HepG2 (cell line): ENCODE measurements at regions of chr10 and their contacts with region 1.

Region 1: GRCh38 chr10:70169649-70170364 is 507 bp downstream of the SAR1A start:
- DNase-seq: no peak
- ATAC-seq: peak; percentile 5
- H3K4me3 ChIP-seq: peak overlapping the region; percentile 82 to 90 (median 90)
- H3K27ac ChIP-seq: peak overlapping the region; percentile 80
- H3K4me1 ChIP-seq: peaks cover 69% of the 10 kb centered on the region
- H3K27me3 ChIP-seq: no peaks in the 10 kb centered on the region; a peak in 1 of 5 replicates
- CTCF ChIP-seq: no peak
- EP300 ChIP-seq: no peak
- POLR2A ChIP-seq: no peak; a peak in 1 of 4 replicates
- RAD21 ChIP-seq: no peak

Region 2: DNA sequence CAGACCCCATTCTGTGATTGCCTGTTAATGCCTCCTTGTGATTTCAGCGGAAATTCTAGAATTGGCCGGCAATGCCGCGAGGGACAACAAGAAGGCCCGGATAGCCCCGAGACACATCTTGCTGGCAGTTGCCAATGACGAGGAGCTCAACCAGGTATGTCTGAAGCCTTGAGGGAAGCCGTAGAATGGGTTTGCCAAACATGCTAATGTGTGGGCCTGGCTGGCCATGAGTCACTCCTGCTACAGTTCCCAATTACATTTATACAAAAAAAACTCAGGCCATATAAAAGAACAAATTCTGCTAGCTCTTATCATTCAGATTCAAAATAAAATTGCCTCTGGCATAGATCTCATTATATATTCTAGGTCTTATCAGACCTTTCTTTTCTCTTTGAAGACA is 79.8 kb before region 1 on chr10:
- CTCF ChIA-PET with region 1: no interaction called
- POLR2A ChIA-PET with region 1: interaction called, 12 read pairs
- in situ Hi-C with region 1: no loop called
- intact Hi-C with region 1: no loop called
- DNase-seq: no peak
- ATAC-seq: no peak
- H3K4me3 ChIP-seq: no peak overlapping the region
- H3K27ac ChIP-seq: peak overlapping the region; percentile 79
- H3K4me1 ChIP-seq: peaks cover 97% of the 10 kb centered on the region
- H3K27me3 ChIP-seq: no peaks in the 10 kb centered on the region
- CTCF ChIP-seq: no peak
- EP300 ChIP-seq: no peak
- POLR2A ChIP-seq: no peak
- RAD21 ChIP-seq: no peak

Region 3: DNA sequence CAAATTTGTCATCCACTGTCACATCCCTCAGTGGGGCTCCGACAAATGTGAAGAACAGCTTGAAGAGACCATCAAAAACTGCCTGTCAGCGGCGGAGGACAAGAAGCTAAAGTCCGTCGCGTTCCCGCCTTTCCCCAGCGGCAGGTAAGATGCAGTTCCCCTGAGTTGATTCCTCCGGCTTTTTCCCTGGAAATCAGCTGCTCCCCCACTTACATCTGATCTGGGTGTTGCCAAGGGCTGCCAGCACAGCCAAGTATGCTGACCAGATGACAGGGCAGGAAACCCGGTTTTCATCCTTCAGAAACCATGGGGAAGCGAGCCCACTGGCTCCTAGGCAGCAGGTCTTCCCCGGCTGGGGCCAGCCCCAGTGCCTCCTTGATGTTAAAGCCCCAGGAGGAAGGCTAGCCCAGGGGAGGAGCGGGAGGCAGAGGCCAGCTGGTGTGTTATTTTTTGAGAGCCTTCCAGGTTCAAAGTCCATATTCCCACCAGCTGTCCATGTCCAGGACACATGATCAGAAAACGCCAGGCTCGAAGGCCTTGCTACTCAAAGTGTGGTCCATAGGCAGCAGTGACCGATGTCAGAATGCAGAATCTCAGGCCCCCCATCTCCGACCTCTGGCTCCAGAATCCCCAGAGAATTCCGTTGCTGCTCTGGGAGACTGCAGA is 60.6 kb before region 1 on chr10:
- CTCF ChIA-PET with region 1: no interaction called
- POLR2A ChIA-PET with region 1: interaction called, 12 read pairs
- in situ Hi-C with region 1: no loop called
- intact Hi-C with region 1: no loop called
- DNase-seq: peak; percentile 57
- ATAC-seq: peak; percentile 70
- H3K4me3 ChIP-seq: no peak overlapping the region
- H3K27ac ChIP-seq: peak overlapping the region; percentile 45
- H3K4me1 ChIP-seq: peaks cover 23% of the 10 kb centered on the region
- H3K27me3 ChIP-seq: no peaks in the 10 kb centered on the region; a peak in 1 of 5 replicates
- CTCF ChIP-seq: peak; percentile 12; the same call in 1 of the 2 replicates
- EP300 ChIP-seq: peak in 1 of 2 experiments; percentile 81; a peak in 2 of 4 replicates
- POLR2A ChIP-seq: peak in 1 of 2 experiments; percentile 30; a peak in 1 of 4 replicates
- RAD21 ChIP-seq: no peak

Region 4: DNA sequence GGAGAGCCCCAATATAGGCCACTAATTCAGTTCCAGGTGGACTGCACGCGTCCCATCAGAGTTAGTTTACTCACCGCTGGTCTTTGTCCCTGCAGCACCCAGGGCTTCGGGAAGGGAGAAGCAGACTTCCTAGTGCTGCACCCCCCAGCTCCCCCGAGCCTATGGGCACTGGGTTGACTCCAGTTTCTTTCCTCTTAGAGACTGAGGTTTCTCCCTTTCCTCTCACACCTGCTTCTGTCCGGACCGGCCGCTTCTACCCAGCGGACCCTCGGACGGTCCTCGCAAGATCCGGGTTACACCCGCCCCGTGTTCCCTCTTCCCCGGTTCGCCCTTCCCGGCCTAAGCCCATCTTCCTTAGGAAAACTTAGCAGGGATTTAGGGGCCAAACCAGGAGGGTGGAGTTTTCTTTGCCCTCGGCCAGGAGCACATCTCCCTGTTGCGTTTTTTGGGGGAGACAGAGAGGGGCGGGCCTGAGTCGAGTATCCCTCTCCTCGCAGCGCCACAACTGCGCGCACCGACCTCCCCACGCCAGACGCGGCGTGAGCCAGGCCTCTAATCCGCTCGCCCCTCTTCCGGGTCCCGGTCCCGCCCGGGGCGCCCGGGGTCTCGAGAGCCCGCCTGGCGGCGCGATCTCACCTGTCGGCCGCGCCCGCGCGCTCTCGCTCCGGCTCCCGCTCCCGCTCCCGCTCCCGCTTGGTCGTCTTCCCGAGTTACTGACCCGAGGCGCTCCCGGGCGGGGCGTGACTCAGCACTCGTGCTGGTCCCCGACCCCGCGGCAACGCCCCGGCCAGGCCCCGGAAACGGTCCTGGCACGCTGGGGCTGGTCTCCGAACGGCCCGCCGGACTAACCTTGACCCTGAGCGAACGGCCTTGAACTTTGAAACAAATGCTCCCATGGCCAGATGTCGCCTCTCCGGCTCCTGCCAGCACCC is 37.4 kb before region 1 on chr10 and contains the start of gene AIFM2:
- CTCF ChIA-PET with region 1: no interaction called
- POLR2A ChIA-PET with region 1: interaction called, 16 read pairs
- in situ Hi-C with region 1: no loop called
- intact Hi-C with region 1: no loop called
- DNase-seq: peak; percentile 80
- ATAC-seq: peak; percentile 81
- H3K4me3 ChIP-seq: peak within 1 kb of the TSS; percentile 77 to 97 (median 94)
- H3K27ac ChIP-seq: peak within 1 kb of the TSS; percentile 97
- H3K4me1 ChIP-seq: peaks cover 62% of the 10 kb centered on the region
- H3K27me3 ChIP-seq: no peaks in the 10 kb centered on the region; a peak in 1 of 5 replicates
- CTCF ChIP-seq: no peak; the same call in none of the 2 replicates
- EP300 ChIP-seq: peak in 1 of 2 experiments; percentile 78; a peak in 2 of 4 replicates
- POLR2A ChIP-seq: peak; percentile 53 to 71; a peak in 3 of 4 replicates
- RAD21 ChIP-seq: peak; percentile 53
- total RNA-seq, gene AIFM2: 20.3 and 29.6 TPM in 2 replicates

Region 5: GRCh38 chr10:70191972-70192305 is 22.1 kb after region 1 on chr10:
- CTCF ChIA-PET with region 1: no interaction called
- POLR2A ChIA-PET with region 1: interaction called, 17 read pairs
- in situ Hi-C with region 1: no loop called
- intact Hi-C with region 1: no loop called
- DNase-seq: no peak
- ATAC-seq: no peak
- H3K4me3 ChIP-seq: no peak overlapping the region
- H3K27ac ChIP-seq: no peak overlapping the region
- H3K4me1 ChIP-seq: peaks cover 27% of the 10 kb centered on the region
- H3K27me3 ChIP-seq: no peaks in the 10 kb centered on the region
- CTCF ChIP-seq: no peak
- EP300 ChIP-seq: no peak
- POLR2A ChIP-seq: no peak
- RAD21 ChIP-seq: no peak

Region 6: GRCh38 chr10:70233109-70233938 is 63.5 kb after region 1 on chr10 and contains the start of gene PPA1:
- CTCF ChIA-PET with region 1: no interaction called
- POLR2A ChIA-PET with region 1: interaction called, 15 read pairs
- in situ Hi-C with region 1: no loop called
- intact Hi-C with region 1: no loop called
- DNase-seq: peak; percentile 92
- ATAC-seq: peak; percentile 89
- H3K4me3 ChIP-seq: peak within 1 kb of the TSS; percentile 82 to 93 (median 86)
- H3K27ac ChIP-seq: peak within 1 kb of the TSS; percentile 92
- H3K4me1 ChIP-seq: peaks cover 68% of the 10 kb centered on the region
- H3K27me3 ChIP-seq: no peaks in the 10 kb centered on the region; a peak in 1 of 5 replicates
- CTCF ChIP-seq: peak; percentile 38; the same call in 1 of the 2 replicates
- EP300 ChIP-seq: peak in 1 of 2 experiments; percentile 42; a peak in 1 of 4 replicates
- POLR2A ChIP-seq: peak; percentile 89 to 97
- RAD21 ChIP-seq: peak; percentile 40; the same call in 1 of the 2 replicates
- total RNA-seq, gene PPA1: 250 and 371 TPM in 2 replicates

Region 7: DNA sequence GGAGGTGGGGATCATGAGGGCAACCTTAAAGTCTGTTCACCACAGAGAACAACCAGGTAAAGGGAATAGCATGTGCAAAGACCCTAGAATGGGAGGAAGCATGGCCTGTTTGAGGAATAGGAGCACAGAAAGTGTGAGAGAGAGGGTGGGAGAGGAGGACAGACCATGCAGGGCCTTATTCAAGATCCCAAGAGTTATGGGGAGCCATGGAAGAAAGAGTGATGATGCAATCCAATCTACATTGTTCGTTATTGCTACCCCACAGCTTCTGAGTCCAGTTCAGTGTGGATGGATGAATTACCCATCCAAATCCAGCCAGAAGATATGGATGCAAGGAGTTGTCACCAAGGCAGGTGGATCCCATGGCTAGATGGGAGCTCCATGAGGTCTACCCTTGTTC is 226.3 kb after region 1 on chr10:
- CTCF ChIA-PET with region 1: no interaction called
- POLR2A ChIA-PET with region 1: no interaction called
- in situ Hi-C with region 1: no loop called
- intact Hi-C with region 1: no loop called
- DNase-seq: no peak
- ATAC-seq: no peak
- H3K4me3 ChIP-seq: no peak overlapping the region
- H3K27ac ChIP-seq: no peak overlapping the region
- H3K4me1 ChIP-seq: peaks cover 8% of the 10 kb centered on the region
- H3K27me3 ChIP-seq: no peaks in the 10 kb centered on the region
- CTCF ChIP-seq: no peak
- EP300 ChIP-seq: no peak
- POLR2A ChIP-seq: no peak
- RAD21 ChIP-seq: no peak

Region 8: DNA sequence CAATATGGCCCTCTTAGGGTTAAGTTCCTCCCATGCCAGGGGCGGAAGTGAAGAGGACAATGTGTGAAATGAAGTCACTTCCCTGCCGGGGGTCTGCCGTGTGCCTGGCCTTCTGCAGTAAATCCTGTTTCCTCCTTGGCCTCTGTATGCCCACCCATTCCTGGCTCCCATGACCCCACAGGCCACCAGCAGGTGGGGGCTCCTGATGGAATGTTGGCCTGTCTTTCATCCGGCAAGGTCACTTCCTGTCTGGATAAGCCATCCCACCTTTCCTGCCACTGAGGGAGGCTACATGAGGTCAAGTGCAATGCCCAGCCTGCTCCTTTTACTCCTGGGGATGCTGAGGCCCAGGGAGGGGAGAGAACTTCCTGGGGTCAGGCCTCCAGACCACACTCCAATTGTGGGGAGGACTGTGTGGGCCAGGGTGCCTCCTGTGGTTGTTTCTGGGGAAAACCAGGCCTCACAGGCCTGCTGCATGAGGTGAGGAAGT is 331.1 kb after region 1 on chr10:
- CTCF ChIA-PET with region 1: no interaction called
- POLR2A ChIA-PET with region 1: no interaction called
- in situ Hi-C with region 1: no loop called
- intact Hi-C with region 1: no loop called
- DNase-seq: no peak
- ATAC-seq: no peak
- H3K4me3 ChIP-seq: 0 out of 6 replicates have a peak overlapping the region, but pooled peaks of 1 of the 3 experiments have one; percentile 16
- H3K27ac ChIP-seq: no peak overlapping the region
- H3K4me1 ChIP-seq: peaks cover 29% of the 10 kb centered on the region
- H3K27me3 ChIP-seq: peaks cover 2 to 15% of the 10 kb centered on the region in 2 experiments; a peak in 2 of 5 replicates
- CTCF ChIP-seq: no peak
- EP300 ChIP-seq: no peak
- POLR2A ChIP-seq: no peak
- RAD21 ChIP-seq: no peak